ENCODE measurements at regions of chr6 and their contacts with region 1.

Region 1: GRCh38 chr6:157756708-157757429 is 66.2 kb upstream of the SNX9 start:
- DNase-seq: peak; percentile 89
- H3K4me3 ChIP-seq: peak overlapping the region in 1 of 2 donors; percentile 2
- H3K27ac ChIP-seq: peak overlapping the region; percentile 44 to 62
- H3K4me1 ChIP-seq: no peaks in the 10 kb centered on the region
- H3K27me3 ChIP-seq: no peaks in the 10 kb centered on the region
- CTCF ChIP-seq: peak; percentile 69 to 87 (median 84)
- POLR2A ChIP-seq: no peak

Region 2: GRCh38 chr6:157494132-157494710 is 262.6 kb before region 1 on chr6:
- intact Hi-C with region 1: no loop called
- DNase-seq: no peak
- H3K4me3 ChIP-seq: no peak overlapping the region
- H3K27ac ChIP-seq: no peak overlapping the region
- H3K4me1 ChIP-seq: no peaks in the 10 kb centered on the region
- H3K27me3 ChIP-seq: no peaks in the 10 kb centered on the region
- CTCF ChIP-seq: no peak
- POLR2A ChIP-seq: no peak

Region 3: DNA sequence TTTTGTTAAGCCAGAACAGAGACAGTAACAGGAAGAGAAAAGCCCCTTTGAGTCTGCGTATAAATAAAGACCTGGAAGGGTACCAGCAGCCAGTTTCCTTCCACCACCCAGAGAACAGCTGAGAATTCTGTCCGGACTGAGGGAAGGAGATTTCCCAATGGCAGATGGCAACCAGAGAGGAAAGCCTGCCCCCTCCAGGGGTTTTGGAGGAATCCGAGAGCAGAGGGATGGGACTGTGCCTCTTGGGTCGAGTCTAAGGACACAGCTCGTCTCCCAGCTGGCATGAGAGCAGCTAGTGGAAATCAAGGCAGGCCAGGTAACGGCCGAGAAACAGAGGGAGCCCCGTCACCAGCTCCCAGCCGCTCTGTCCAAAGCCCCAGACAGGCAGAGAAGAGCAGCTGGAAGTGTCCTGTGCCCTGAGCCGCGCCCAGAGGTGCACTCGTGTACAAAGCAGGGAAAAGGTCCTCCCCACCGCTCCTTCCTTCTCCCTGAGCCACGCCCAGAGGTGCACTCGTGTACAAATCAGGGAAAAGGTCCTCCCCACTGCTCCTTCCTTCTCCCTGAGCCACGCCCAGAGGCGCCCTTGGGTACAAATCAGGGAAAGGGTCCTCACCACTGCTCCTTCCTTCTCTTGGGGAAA is 67.8 kb before region 1 on chr6:
- intact Hi-C with region 1: no loop called
- DNase-seq: no peak
- H3K4me3 ChIP-seq: no peak overlapping the region
- H3K27ac ChIP-seq: no peak overlapping the region
- H3K4me1 ChIP-seq: no peaks in the 10 kb centered on the region
- H3K27me3 ChIP-seq: no peaks in the 10 kb centered on the region
- CTCF ChIP-seq: peak in 1 of 4 experiments; percentile 5
- POLR2A ChIP-seq: no peak

Region 4: DNA sequence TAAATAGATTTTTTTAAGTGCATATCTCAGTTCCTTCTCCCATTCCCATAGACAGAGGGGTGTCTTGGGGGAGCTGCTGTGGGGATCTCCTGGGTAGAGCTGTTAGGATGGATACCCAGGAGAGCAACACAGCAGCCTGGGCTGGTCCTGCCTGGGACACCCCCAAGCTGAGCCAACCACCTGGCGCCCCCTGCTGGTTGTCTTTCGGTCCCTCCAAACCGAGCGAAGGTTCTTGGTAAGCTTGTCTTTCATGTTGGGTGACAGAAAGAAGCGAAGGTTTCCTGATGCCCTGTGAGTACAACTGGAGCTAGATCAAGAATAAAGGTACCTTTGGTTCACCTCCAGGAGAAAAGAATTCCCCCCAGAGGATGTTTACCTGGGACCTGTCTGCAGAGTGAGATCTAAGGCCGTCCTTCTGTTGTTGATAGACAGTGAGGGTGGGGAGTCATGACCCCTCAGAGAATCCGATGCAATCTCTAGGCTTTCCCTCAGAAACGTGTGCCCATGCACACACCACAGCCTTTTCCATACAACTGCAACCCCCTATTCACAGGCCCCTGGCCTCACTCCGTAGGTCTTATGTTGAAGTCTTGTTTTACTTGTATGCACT is 117.0 kb after region 1 on chr6:
- intact Hi-C with region 1: loop called (anchors 2 kb)
- DNase-seq: peak; percentile 68
- H3K4me3 ChIP-seq: no peak overlapping the region
- H3K27ac ChIP-seq: no peak overlapping the region
- H3K4me1 ChIP-seq: no peaks in the 10 kb centered on the region
- H3K27me3 ChIP-seq: no peaks in the 10 kb centered on the region
- CTCF ChIP-seq: peak; percentile 54 to 82 (median 72)
- POLR2A ChIP-seq: no peak

Region 5: DNA sequence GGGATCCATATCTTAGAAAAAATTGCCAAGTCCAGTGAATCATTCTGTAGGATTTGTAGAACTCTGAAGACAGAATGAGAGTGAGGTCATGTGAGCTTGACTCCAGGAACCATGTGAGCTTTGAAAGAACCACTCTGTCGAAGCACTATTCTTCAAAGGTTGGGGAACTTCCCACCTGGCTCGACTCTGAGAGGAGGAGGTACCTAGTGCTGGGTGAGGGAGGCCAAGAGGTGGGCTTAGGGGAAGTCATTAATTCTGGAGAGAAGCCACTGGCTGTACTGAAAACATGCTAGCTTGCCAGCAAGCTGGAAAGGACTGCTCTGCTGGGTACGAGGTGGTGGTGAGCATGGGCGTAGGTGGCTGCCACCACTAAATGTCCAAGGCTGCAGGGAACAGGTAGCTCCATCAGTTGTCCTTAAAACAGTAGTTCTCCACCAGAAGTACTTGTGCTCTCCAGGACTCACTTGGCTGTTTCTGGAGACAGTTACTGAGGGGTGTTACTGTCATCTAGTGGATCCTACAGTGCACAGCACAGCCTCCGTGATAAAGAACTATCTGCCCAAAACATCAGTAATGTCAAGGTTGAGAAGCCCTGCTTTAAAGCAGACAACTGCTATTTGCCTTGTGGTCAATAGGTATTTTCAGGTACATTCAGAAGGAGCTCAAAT is 190.1 kb after region 1 on chr6:
- intact Hi-C with region 1: loop called (anchors 10 kb)
- DNase-seq: no peak
- H3K4me3 ChIP-seq: no peak overlapping the region
- H3K27ac ChIP-seq: no peak overlapping the region
- H3K4me1 ChIP-seq: no peaks in the 10 kb centered on the region
- H3K27me3 ChIP-seq: no peaks in the 10 kb centered on the region
- CTCF ChIP-seq: peak in 3 of 4 experiments; percentile 24 to 47 (median 31)
- POLR2A ChIP-seq: no peak

Region 6: GRCh38 chr6:158500016-158500735 is 743.3 kb after region 1 on chr6:
- intact Hi-C with region 1: no loop called
- DNase-seq: no peak
- H3K4me3 ChIP-seq: no peak overlapping the region
- H3K27ac ChIP-seq: peak overlapping the region in 1 of 2 donors; percentile 19
- H3K4me1 ChIP-seq: no peaks in the 10 kb centered on the region
- H3K27me3 ChIP-seq: no peaks in the 10 kb centered on the region
- CTCF ChIP-seq: no peak
- POLR2A ChIP-seq: no peak